Activated T-helper 2 cell treated with anti-CD3 and anti-CD28 coated beads, Interferon-gamma antibody, Interleukin-2, Interleukin-4, amounts not matched to agents 10 μg/mL and 5 μg/mL and 100 μg/mL, durations not matched to agents 14 hours and 24 hours and 36 hours (primary cell): ENCODE measurements at regions of chr9 and their contacts with region 1.

Region 1: GRCh38 chr9:96566498-96567207 is 53.0 kb downstream of the CDC14B start:
- DNase-seq: peak; percentile 74
- H3K4me3 Mint-ChIP-seq: peak overlapping the region; percentile 72
- H3K27ac Mint-ChIP-seq: peak overlapping the region; percentile 71
- H3K4me1 Mint-ChIP-seq: peaks cover 30% of the 10 kb centered on the region
- H3K27me3 Mint-ChIP-seq: peaks cover 3% of the 10 kb centered on the region

Region 2: DNA sequence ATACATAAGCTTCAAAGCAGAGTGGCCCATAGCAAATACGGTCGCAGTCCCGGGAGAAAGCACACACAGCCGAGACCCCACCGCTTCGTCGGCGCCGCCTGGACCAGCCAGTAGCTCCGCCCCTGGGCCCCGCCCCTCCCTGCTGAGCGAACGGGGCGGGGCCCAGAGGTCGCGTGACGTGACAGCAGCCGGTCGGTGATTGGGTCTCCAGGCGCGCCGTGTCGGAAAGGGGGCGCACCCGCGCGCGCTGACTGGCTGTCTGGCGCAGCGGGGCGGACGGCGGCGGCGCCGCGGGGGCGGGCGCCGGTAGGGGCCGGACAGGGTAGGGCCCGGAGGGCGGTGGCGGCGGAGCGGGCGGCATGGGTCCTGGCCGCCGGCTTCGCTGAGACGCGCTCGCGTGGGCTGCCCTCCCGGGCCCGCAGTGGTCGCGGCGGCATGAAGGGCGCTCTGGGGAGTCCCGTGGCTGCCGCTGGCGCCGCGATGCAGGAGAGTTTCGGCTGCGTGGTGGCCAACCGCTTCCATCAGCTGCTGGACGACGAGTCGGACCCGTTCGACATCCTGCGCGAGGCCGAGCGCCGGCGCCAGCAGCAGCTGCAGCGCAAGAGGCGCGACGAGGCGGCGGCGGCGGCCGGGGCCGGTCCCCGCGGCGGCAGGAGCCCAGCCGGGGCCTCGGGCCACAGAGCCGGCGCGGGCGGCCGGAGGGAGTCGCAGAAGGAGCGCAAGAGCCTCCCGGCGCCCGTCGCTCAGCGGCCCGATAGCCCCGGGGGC is 116.6 kb before region 1 on chr9 and contains the start of gene HABP4:
- intact Hi-C with region 1: loop called (anchors 1 kb)
- DNase-seq: peak; percentile 93
- H3K4me3 Mint-ChIP-seq: peak within 1 kb of the TSS; percentile 86
- H3K27ac Mint-ChIP-seq: no peak within 1 kb of the TSS
- H3K4me1 Mint-ChIP-seq: peaks cover 28% of the 10 kb centered on the region
- H3K27me3 Mint-ChIP-seq: peaks cover 11% of the 10 kb centered on the region
- total RNA-seq, gene HABP4: 14.3 and 14.4 TPM in 2 replicates

Region 3: DNA sequence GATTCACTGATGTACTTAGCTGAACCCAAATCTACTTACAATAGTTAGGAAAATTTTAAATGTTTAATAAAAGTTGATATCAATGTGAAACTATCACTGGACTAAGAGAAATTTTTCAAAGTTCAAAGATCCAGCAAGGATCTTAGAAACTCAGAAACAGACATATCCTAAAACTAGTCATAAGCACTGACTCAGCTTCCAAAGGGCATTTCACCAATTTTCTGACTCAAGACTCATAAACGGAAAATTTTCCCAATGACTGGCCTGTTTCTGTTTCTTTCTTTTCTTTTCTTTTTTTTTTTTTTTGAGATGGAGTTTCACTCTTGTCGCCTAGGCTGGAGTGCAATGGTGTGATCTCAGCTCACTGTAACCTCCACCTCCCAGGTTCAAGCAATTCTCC is 13.6 kb before region 1 on chr9:
- intact Hi-C with region 1: loop called (anchors 1 kb)
- DNase-seq: no peak
- H3K4me3 Mint-ChIP-seq: no peak overlapping the region
- H3K27ac Mint-ChIP-seq: peak overlapping the region; percentile 11
- H3K4me1 Mint-ChIP-seq: peaks cover 49% of the 10 kb centered on the region
- H3K27me3 Mint-ChIP-seq: no peaks in the 10 kb centered on the region

Region 4: GRCh38 chr9:96654443-96655197 is 88.0 kb after region 1 on chr9:
- intact Hi-C with region 1: loop called (anchors 2 kb)
- DNase-seq: peak; percentile 62
- H3K4me3 Mint-ChIP-seq: peak overlapping the region; percentile 85
- H3K27ac Mint-ChIP-seq: peak overlapping the region; percentile 73
- H3K4me1 Mint-ChIP-seq: peaks cover 16% of the 10 kb centered on the region
- H3K27me3 Mint-ChIP-seq: peaks cover 14% of the 10 kb centered on the region

Region 5: GRCh38 chr9:96777426-96777864 is 210.8 kb after region 1 on chr9:
- intact Hi-C with region 1: loop called (anchors 5 kb)
- DNase-seq: no peak
- H3K4me3 Mint-ChIP-seq: peak overlapping the region; percentile 100
- H3K27ac Mint-ChIP-seq: peak overlapping the region; percentile 91
- H3K4me1 Mint-ChIP-seq: peaks cover 24% of the 10 kb centered on the region
- H3K27me3 Mint-ChIP-seq: no peaks in the 10 kb centered on the region